ENCODE measurements at regions of chrX and their contacts with region 1.

Region 1: DNA sequence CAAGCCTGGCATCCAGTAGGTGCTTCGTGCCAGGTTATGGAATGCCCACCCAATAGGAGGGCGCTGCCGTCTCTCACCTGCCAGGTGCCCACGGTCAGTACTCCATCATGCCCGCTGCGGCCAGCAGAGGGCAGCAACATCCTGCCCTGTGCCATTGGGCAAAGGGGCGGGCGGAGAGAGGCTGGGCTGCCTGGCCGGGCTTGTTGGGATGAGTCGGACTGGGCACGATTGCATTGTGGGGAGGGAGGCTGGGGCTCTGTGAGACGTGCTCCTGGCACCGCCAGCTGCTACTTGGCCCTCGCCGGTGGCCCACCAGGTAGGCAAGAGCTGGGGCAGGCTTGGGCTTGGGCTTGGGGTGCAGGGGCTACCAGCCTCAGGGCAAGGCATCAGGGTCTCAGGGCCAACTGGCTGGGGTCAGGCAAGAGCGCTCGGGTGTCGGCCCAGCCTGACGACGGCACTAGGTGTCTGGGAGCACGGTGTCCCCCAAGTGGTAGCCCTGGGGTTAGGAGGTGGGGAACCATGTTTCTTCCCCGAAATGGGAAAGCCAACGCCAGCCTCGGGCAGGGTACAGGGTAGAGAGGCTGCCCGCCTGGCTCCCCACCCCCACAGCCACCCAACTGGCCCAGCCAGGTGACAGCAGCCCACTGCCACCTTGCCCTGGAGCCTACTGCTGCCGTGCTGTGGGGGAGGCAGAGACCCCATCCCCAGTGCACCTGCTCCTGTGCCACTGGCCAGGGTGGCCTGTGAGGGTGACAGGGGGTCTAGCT is at the start of gene PLXNB3:
- DNase-seq: peak; percentile 86
- ATAC-seq: peak; percentile 87
- H3K4me3 Mint-ChIP-seq: no peak within 1 kb of the TSS
- H3K27ac Mint-ChIP-seq: no peak within 1 kb of the TSS
- H3K4me1 Mint-ChIP-seq: peaks cover 9% of the 10 kb centered on the region
- H3K27me3 Mint-ChIP-seq: no peaks in the 10 kb centered on the region
- total RNA-seq, gene PLXNB3: 1.6 to 2.4 TPM

Region 2: DNA sequence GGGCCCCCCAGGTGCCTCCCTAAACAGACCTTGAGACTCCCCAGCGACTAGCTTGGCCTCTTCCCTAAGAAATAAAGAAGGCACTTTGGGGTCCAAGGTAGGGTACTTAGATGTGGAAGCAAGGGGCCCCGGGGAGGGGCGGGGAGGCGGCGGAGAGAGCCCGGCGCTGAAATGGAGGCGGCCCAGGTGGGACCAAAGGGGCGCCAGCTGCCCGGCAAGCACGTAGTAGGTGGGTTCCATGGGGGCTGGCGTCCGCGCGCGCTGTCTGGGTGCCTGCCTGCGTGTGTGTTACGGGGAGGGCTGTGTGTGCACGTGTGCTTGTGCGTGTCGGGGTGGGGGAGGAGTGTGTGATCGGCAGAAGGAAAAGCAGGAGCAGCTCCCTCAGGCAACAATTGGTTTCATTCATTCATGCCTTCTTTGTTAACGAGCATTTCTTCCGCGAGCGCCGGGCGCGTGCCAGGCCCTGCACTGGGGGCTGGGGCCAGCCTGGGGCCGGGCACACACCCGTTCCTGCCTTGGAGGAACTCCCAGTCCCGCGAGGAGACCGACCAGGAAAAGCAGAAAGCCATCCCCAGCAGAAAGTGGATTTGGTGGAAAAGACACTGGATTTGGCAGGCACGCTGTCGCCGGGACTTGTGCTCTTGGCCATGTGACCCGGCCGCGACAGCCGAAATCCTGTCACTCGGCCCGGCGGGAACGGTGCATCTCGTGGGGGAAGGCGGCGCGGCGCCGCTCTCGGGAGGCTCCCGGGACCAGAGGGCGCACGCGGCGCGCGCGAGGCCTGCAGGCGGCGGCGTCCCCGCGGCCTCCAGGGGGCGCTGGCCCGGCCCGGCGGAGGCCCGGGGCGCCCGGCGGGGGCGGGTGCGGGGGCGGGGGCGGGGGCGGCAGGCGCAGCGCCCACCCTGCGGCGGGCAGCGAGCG is 120.5 kb before region 1 on chrX:
- CTCF ChIA-PET with region 1: no interaction called
- POLR2A ChIA-PET with region 1: no interaction called
- intact Hi-C with region 1: no loop called
- DNase-seq: no peak
- ATAC-seq: no peak
- H3K4me3 Mint-ChIP-seq: no peak overlapping the region
- H3K27ac Mint-ChIP-seq: no peak overlapping the region
- H3K4me1 Mint-ChIP-seq: peaks cover 12% of the 10 kb centered on the region
- H3K27me3 Mint-ChIP-seq: peaks cover 33% of the 10 kb centered on the region

Region 3: DNA sequence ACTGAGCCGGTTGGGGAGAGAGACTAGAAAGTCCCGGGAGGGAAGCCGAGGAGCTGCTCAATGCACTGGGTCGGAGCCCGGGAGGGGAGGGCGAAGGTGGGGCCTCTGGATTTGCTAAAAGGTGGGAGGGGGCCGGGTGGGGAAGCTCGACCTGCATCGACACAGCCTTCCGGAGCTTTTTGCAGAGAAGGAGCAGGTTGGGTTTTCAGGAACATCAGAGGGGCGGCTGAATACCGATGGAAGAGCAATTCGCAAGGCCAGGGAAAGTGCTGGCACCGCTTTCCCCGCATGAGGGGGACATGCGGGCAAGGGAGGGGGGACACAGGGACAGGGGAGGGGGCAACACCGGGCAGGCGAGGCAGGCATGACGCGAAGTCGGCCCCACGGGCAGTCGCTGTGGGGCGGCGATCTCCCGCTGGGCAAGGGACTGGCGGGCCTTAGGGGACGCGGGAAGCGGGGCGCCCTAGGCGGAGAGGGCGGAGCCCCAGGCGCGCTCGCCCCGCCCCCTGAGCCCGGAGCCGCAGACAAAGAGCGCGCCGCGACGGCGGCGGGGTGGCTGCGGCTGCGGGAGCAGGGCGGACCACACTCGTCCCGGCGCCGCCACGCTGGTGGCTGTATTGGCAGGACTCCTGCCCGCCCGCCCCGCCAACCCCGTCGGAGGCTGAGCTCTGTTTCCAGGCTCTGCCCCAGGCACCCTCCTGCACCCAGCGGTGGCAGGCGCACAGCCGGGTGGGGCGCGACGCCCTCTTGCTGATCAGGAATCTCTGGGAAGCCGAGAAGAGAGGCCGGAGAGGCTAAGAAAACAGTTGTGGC is 54.6 kb after region 1 on chrX:
- CTCF ChIA-PET with region 1: interaction called, 3 read pairs
- POLR2A ChIA-PET with region 1: no interaction called
- intact Hi-C with region 1: loop called in 1 of 2 experiments (anchors 5 kb)
- DNase-seq: peak; percentile 71
- ATAC-seq: peak; percentile 78
- H3K4me3 Mint-ChIP-seq: peak overlapping the region; percentile 52
- H3K27ac Mint-ChIP-seq: no peak overlapping the region
- H3K4me1 Mint-ChIP-seq: peaks cover 47% of the 10 kb centered on the region
- H3K27me3 Mint-ChIP-seq: no peaks in the 10 kb centered on the region

Region 4: GRCh38 chrX:153900831-153901752 is 136.9 kb after region 1 on chrX:
- CTCF ChIA-PET with region 1: no interaction called
- POLR2A ChIA-PET with region 1: no interaction called
- intact Hi-C with region 1: loop called in 1 of 2 experiments (anchors 5 kb)
- DNase-seq: peak; percentile 78
- ATAC-seq: peak; percentile 83
- H3K4me3 Mint-ChIP-seq: peak overlapping the region; percentile 49
- H3K27ac Mint-ChIP-seq: peak overlapping the region; percentile 47
- H3K4me1 Mint-ChIP-seq: peaks cover 41% of the 10 kb centered on the region
- H3K27me3 Mint-ChIP-seq: no peaks in the 10 kb centered on the region

Region 5: DNA sequence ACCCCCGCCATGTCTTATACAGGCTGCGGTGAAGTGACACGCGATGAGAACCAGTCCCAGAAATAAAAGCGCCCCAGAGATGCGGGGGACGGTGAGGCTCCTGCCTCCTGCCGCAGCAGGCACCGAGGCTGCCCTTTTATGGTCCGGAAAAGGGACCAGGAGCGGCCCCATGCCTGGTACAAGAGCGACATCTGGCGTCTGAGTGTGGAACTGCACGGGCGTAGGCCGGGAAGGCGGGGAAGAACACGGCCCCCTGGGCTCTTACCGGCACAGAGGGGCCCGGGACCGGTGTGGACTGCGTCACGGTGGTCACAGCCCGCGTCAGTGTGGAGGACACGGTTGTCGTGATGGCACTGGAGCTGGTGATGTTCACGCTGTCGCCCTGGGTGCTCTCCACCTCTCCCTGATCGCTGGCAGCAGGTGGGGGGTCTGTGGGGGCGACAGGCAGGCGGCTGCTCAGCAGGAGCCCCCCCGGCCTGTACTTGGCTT is 189.2 kb after region 1 on chrX:
- CTCF ChIA-PET with region 1: interaction called, 8 read pairs
- POLR2A ChIA-PET with region 1: no interaction called
- intact Hi-C with region 1: loop called (anchors 1 to 5 kb)
- DNase-seq: peak; percentile 87
- ATAC-seq: peak; percentile 76
- H3K4me3 Mint-ChIP-seq: no peak overlapping the region
- H3K27ac Mint-ChIP-seq: peak overlapping the region; percentile 70
- H3K4me1 Mint-ChIP-seq: peaks cover 10% of the 10 kb centered on the region
- H3K27me3 Mint-ChIP-seq: no peaks in the 10 kb centered on the region